ENCODE measurements at regions of chr11 and their contacts with region 1.

Region 1: DNA sequence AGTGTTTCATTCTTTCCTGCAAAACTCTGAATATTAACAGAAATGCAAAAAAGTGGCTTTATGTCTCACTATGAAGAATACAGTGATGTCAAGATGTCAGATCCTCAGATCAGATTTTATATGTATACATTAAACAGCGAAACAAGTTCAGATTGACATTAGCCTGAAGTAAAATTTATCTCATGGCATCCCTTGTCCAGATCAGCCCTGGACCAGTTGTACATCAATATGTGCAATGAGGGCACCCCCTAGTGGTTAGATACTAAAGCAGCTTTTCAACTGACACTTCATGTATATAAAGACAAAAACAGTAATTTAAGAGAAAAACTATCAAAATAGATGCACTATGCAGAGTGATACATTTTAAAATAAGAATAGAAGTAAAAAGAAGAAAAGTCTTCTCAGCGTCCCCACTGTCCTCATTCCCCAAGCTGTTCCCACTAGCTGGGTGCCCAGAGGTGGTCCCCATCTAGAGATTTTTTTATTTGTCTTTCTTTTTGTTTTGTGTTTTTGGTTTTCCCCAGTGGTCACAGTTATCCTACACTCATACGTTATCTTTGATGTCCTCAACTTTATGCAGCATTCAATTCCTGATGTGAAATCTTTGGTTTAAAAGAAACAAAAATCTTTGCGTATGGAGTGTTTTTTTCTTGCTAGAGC is 2193.4 kb upstream of the RAG2 start:
- DNase-seq: peak; percentile 96
- H3K4me3 ChIP-seq: no peak overlapping the region
- H3K27ac ChIP-seq: no peak overlapping the region
- H3K4me1 ChIP-seq: peaks cover 10% of the 10 kb centered on the region
- H3K27me3 ChIP-seq: no peaks in the 10 kb centered on the region
- CTCF ChIP-seq: peak; percentile 100

Region 2: GRCh38 chr11:37006563-37006962 is 1784.9 kb before region 1 on chr11:
- CTCF ChIA-PET with region 1: no interaction called
- POLR2A ChIA-PET with region 1: no interaction called
- intact Hi-C with region 1: loop called (anchors 2 kb)
- DNase-seq: no peak
- H3K4me3 ChIP-seq: no peak overlapping the region
- H3K27ac ChIP-seq: no peak overlapping the region
- H3K4me1 ChIP-seq: peaks cover 25% of the 10 kb centered on the region
- H3K27me3 ChIP-seq: no peaks in the 10 kb centered on the region
- CTCF ChIP-seq: no peak

Region 3: GRCh38 chr11:37449146-37449545 is 1342.3 kb before region 1 on chr11:
- CTCF ChIA-PET with region 1: no interaction called
- POLR2A ChIA-PET with region 1: no interaction called
- intact Hi-C with region 1: loop called (anchors 2 kb)
- DNase-seq: peak; percentile 94
- H3K4me3 ChIP-seq: no peak overlapping the region
- H3K27ac ChIP-seq: no peak overlapping the region
- H3K4me1 ChIP-seq: peaks cover 50% of the 10 kb centered on the region
- H3K27me3 ChIP-seq: no peaks in the 10 kb centered on the region
- CTCF ChIP-seq: peak; percentile 92

Region 4: GRCh38 chr11:37657645-37658044 is 1133.8 kb before region 1 on chr11:
- CTCF ChIA-PET with region 1: no interaction called
- POLR2A ChIA-PET with region 1: no interaction called
- intact Hi-C with region 1: loop called (anchors 5 kb)
- DNase-seq: peak; percentile 70
- H3K4me3 ChIP-seq: no peak overlapping the region
- H3K27ac ChIP-seq: no peak overlapping the region
- H3K4me1 ChIP-seq: no peaks in the 10 kb centered on the region
- H3K27me3 ChIP-seq: no peaks in the 10 kb centered on the region
- CTCF ChIP-seq: peak; percentile 80

Region 5: GRCh38 chr11:37946155-37946766 is 845.2 kb before region 1 on chr11:
- CTCF ChIA-PET with region 1: interaction called, 10 read pairs
- POLR2A ChIA-PET with region 1: no interaction called
- intact Hi-C with region 1: loop called (anchors 2 kb)
- DNase-seq: peak; percentile 86
- H3K4me3 ChIP-seq: no peak overlapping the region
- H3K27ac ChIP-seq: no peak overlapping the region
- H3K4me1 ChIP-seq: no peaks in the 10 kb centered on the region
- H3K27me3 ChIP-seq: no peaks in the 10 kb centered on the region
- CTCF ChIP-seq: peak; percentile 96

Region 6: GRCh38 chr11:38191101-38191500 is 600.3 kb before region 1 on chr11:
- CTCF ChIA-PET with region 1: interaction called, 3 read pairs
- POLR2A ChIA-PET with region 1: no interaction called
- intact Hi-C with region 1: loop called (anchors 1 kb)
- DNase-seq: peak; percentile 56
- H3K4me3 ChIP-seq: no peak overlapping the region
- H3K27ac ChIP-seq: no peak overlapping the region
- H3K4me1 ChIP-seq: peaks cover 4% of the 10 kb centered on the region
- H3K27me3 ChIP-seq: no peaks in the 10 kb centered on the region
- CTCF ChIP-seq: peak; percentile 48

Region 7: DNA sequence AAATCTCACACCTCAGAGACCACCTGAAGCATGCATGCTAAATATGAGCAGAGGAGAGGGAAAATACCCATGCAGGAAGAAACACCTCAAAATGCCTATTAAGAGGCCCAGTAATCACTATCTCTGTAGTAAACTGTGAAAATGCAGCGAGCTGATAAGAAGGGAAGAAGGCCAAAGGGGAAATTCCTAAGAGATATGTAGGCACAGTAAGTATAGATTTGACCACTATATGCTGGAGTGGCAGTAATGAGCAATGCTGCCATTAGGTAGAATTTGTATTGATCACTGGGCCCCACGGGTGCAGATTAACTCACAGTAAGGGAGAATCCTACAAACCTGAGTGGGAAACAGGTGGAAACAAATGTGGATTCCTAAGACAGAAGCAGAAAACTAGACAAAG is 380.3 kb before region 1 on chr11:
- CTCF ChIA-PET with region 1: no interaction called
- POLR2A ChIA-PET with region 1: no interaction called
- intact Hi-C with region 1: no loop called
- DNase-seq: no peak
- H3K4me3 ChIP-seq: no peak overlapping the region
- H3K27ac ChIP-seq: no peak overlapping the region
- H3K4me1 ChIP-seq: peaks cover 10% of the 10 kb centered on the region
- H3K27me3 ChIP-seq: no peaks in the 10 kb centered on the region
- CTCF ChIP-seq: peak; percentile 52

Region 8: GRCh38 chr11:38680746-38681145 is 110.7 kb before region 1 on chr11:
- CTCF ChIA-PET with region 1: no interaction called
- POLR2A ChIA-PET with region 1: no interaction called
- intact Hi-C with region 1: no loop called
- DNase-seq: no peak
- H3K4me3 ChIP-seq: no peak overlapping the region
- H3K27ac ChIP-seq: no peak overlapping the region
- H3K4me1 ChIP-seq: no peaks in the 10 kb centered on the region
- H3K27me3 ChIP-seq: no peaks in the 10 kb centered on the region
- CTCF ChIP-seq: no peak

Region 9: GRCh38 chr11:39365809-39366436 is 574.5 kb after region 1 on chr11:
- CTCF ChIA-PET with region 1: interaction called, 6 read pairs
- POLR2A ChIA-PET with region 1: no interaction called
- intact Hi-C with region 1: loop called (anchors 2 kb)
- DNase-seq: peak; percentile 96
- H3K4me3 ChIP-seq: no peak overlapping the region
- H3K27ac ChIP-seq: peak overlapping the region; percentile 56
- H3K4me1 ChIP-seq: peaks cover 32% of the 10 kb centered on the region
- H3K27me3 ChIP-seq: no peaks in the 10 kb centered on the region
- CTCF ChIP-seq: peak; percentile 99

Measured in A673 (cell line).